Naive thymus-derived CD4-positive, alpha-beta T cell (primary cell): ENCODE measurements at regions of chr19 and their contacts with region 1.

Region 1: GRCh38 chr19:49565261-49565660 is 15.1 kb downstream of the NOSIP start:
- DNase-seq: peak in 5 of 9 donors; percentile 46 to 65 (median 54)
- ATAC-seq: no peak
- H3K4me3 ChIP-seq: peak overlapping the region; percentile 31
- H3K4me3 Mint-ChIP-seq: peak overlapping the region; percentile 11 to 90 (median 73)
- H3K27ac ChIP-seq: peak overlapping the region; percentile 88
- H3K27ac Mint-ChIP-seq: peak overlapping the region; percentile 91 to 99 (median 96)
- H3K4me1 ChIP-seq: peaks cover 77 to 85% of the 10 kb centered on the region in 2 donors
- H3K4me1 Mint-ChIP-seq: peaks cover 64 to 90% (median 84%) of the 10 kb centered on the region in 7 donors
- H3K27me3 ChIP-seq: no peaks in the 10 kb centered on the region
- H3K27me3 Mint-ChIP-seq: peaks cover 0 to 2% (median 0%) of the 10 kb centered on the region in 5 donors

Region 2: DNA sequence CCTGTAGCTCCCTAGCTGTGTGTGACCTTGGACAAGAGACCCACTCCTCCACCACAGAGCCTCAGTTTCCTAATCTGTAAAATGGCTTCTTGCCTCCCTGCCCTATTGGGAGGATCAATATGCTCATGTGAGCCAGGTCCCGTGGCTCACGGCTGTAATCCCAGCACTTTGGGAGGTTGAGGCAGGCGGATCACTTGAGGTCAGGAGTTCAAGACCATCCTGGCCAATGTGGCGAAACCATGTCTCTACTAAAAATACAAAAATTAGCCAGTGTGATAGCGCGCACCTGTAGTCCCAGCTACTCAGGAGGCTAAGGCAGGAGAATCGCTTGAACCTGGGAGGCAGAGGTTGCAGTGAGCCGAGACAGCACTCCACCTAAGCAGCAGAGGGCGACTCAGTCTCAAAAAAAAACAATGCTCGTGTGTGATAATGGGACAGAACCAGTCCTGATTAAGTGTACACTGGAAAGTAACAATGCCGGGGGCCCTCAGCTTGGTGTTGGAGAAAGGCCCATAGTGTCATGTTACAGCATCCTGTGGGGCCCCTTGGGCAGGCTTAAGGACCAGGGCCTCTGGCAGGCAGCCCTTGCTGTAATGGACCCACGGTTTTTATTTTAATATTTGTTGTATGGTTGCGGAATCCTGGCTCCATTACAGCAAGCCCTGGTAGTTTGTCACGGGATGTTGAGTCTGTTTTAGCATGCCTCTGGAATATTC is 62.2 kb before region 1 on chr19:
- CTCF ChIA-PET with region 1: interaction called, 314 read pairs
- POLR2A ChIA-PET with region 1: interaction called, 118 read pairs
- intact Hi-C with region 1: loop called (anchors 1 kb)
- DNase-seq: peak in 5 of 9 donors; percentile 68 to 81 (median 77)
- ATAC-seq: no peak
- H3K4me3 ChIP-seq: no peak overlapping the region
- H3K4me3 Mint-ChIP-seq: peak overlapping the region in 6 of 10 donors; percentile 7 to 96 (median 48)
- H3K27ac ChIP-seq: peak overlapping the region; percentile 99
- H3K27ac Mint-ChIP-seq: peak overlapping the region; percentile 91 to 100 (median 98)
- H3K4me1 ChIP-seq: peaks cover 36% of the 10 kb centered on the region in 2 donors
- H3K4me1 Mint-ChIP-seq: peaks cover 24 to 55% (median 40%) of the 10 kb centered on the region in 7 donors
- H3K27me3 ChIP-seq: no peaks in the 10 kb centered on the region
- H3K27me3 Mint-ChIP-seq: peaks cover 0 to 9% (median 0%) of the 10 kb centered on the region in 5 donors